ENCODE measurements at regions of chr19 and their contacts with region 1.

Region 1: DNA sequence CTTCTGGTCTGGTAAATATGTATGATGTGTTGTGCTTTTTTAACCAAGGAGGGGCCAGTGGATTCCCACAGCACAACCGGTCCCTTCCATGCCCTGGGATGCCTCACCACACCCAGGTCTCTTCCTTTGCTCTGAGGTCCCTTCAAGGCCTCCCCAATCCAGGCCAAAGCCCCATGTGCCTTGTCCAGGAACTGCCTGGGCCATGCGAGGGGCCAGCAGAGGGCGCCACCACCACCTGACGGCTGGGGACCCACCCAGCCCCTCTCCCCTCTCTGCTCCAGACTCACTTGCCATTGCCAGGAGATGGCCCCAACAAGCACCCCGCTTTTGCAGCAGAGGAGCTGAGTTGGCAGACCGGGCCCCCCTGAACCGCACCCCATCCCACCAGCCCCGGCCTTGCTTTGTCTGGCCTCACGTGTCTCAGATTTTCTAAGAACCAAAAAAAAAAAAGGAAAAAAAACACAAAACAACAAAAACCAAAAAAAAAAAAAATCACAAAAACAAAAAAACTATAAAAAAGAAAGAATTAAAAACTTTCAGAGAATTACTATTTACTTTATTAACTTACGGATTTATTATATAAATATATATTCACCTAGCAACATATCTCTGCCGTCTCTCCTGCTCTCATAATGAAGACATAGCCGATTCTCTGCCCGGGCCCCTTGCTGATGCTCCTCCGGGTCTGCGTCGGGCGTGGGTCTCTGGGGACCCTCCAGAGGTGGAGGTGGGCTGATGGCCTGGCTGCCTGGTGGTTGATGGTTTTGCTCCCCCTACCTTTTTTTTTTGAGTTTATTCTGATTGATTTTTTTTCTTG is 14.4 kb downstream of the CAPN12 start:
- DNase-seq: peak in 34 of 42 donors; percentile 38 to 84 (median 62)

Region 2: GRCh38 chr19:38701455-38702063 is 28.3 kb before region 1 on chr19:
- intact Hi-C with region 1: no loop called
- DNase-seq: peak in 2 of 42 donors; percentile 47 to 61

Region 3: GRCh38 chr19:38831142-38831605 is 101.3 kb after region 1 on chr19:
- intact Hi-C with region 1: loop called (anchors 5 kb)
- DNase-seq: peak in 35 of 42 donors; percentile 3 to 55 (median 28)

Measured in head of caudate nucleus (tissue), 42 donors.